ENCODE measurements at regions of chr1 and their contacts with region 1.

Region 1: DNA sequence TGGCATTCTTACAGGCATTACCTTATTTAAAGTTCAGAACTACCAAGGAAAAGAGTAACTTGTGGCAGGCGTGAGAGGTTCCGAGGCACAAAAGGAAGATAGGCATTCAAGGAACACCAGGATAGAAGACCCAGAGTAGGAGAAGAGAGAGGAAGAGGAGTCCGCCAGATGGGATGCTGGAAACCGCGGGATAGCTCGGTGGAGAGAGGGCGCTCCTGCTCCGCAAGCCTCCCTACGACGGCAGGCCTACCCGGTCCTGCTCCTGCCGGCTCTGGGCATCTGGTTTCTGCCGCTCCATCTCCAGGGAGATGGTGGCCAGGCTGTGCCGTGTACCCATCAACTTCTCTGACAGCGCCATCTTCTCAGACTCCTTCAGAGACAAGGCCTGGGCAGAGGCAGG is 5.4 kb upstream of the NBPF1 start:
- DNase-seq: peak in 5 of 7 donors; percentile 23 to 71 (median 53)
- H3K4me3 ChIP-seq: no peak overlapping the region
- H3K27ac ChIP-seq: no peak overlapping the region
- H3K4me1 ChIP-seq: peaks cover 3 to 8% of the 10 kb centered on the region in 2 donors
- H3K27me3 ChIP-seq: no peaks in the 10 kb centered on the region
- CTCF ChIP-seq: peak in 1 of 6 experiments; percentile 4
- POLR2A ChIP-seq: no peak

Region 2: DNA sequence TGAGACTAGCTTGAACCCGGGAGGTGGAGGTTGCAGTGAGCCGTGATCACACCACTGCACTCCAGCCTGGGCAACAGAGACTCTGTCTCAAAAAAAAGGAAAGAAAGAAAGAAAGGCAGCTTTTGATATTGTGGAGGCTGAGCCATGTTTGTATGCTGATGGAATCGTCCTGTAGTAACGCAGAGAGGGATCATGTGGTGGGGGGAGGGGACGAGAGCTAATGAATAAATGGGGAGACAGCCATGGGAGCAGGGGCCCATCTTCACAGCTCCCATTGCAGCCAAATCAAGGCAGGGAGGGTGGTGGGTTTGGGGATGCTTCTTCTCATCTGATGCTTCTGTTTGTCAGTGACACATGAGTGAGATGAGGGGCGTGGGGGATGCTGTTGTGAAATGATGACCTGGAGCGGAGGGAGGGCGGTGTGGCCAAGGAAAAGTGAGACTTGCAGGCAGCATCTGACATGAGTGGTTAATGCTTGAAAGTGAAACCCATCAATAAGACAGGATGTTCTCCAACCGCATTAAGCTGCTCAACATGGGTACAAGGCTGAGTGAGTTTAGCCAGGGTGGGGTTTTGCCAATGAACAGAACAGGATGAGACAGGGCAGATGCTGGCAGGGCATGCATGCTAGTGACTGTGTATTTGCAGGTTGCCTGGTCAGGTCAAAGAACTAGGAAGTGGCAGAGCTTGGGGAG is 198.1 kb before region 1 on chr1:
- intact Hi-C with region 1: no loop called
- DNase-seq: no peak
- H3K4me3 ChIP-seq: no peak overlapping the region
- H3K27ac ChIP-seq: no peak overlapping the region
- H3K4me1 ChIP-seq: no peaks in the 10 kb centered on the region
- H3K27me3 ChIP-seq: no peaks in the 10 kb centered on the region
- CTCF ChIP-seq: no peak
- POLR2A ChIP-seq: no peak

Region 3: DNA sequence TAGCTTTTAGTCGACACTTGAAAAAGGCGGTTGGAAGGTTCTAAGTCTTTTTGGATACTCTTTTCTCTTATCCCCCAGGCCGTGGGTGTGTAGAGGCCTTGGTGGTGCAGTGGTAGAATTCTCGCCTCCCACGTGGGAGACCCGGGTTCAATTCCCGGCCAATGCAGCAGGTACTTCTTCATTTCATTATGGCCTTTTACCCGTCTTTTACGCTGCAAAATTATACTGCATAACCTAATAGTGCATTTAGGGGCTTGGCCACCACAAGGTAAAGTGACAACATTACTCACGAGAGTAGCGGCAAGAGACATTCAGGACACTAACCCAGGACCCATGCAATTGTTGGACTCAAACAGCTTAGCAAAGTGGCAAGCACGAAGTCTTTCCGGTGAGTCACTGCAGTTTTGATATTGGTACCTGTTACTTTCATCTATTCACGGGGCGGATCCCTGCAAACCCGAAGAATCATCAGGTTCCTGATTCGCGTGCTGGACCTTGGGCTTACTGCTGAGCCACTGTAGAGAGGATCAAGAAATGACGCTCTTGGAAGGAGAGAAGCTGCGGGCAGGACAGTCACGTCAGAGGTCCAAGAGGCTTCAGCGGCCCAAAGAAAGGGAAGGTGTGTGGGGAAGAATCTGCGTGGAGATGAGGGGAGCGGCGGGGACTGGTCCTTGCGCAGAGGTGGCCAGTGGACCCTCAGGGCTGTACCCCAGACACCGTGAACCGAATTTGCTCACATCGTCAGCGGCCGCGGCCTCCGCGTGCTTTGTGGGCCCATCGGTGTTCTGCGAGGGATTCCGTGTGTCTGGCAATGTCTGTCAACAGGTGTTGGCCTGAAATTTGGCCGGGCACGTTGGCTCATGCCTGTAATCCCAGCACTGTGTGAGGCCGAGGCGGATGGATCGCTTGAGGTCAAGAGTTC is 108.7 kb after region 1 on chr1:
- intact Hi-C with region 1: no loop called
- DNase-seq: peak in 5 of 7 donors; percentile 32 to 66 (median 35)
- H3K4me3 ChIP-seq: no peak overlapping the region
- H3K27ac ChIP-seq: no peak overlapping the region
- H3K4me1 ChIP-seq: no peaks in the 10 kb centered on the region
- H3K27me3 ChIP-seq: peaks cover 13% of the 10 kb centered on the region
- CTCF ChIP-seq: no peak
- POLR2A ChIP-seq: no peak

Region 4: GRCh38 chr1:16946646-16947045 is 327.9 kb after region 1 on chr1:
- intact Hi-C with region 1: loop called in 1 of 2 experiments (anchors 2 kb)
- DNase-seq: no peak
- H3K4me3 ChIP-seq: no peak overlapping the region
- H3K27ac ChIP-seq: no peak overlapping the region
- H3K4me1 ChIP-seq: no peaks in the 10 kb centered on the region
- H3K27me3 ChIP-seq: no peaks in the 10 kb centered on the region
- CTCF ChIP-seq: no peak
- POLR2A ChIP-seq: no peak